ENCODE measurements at regions of chr19 and their contacts with region 1.

Region 1: DNA sequence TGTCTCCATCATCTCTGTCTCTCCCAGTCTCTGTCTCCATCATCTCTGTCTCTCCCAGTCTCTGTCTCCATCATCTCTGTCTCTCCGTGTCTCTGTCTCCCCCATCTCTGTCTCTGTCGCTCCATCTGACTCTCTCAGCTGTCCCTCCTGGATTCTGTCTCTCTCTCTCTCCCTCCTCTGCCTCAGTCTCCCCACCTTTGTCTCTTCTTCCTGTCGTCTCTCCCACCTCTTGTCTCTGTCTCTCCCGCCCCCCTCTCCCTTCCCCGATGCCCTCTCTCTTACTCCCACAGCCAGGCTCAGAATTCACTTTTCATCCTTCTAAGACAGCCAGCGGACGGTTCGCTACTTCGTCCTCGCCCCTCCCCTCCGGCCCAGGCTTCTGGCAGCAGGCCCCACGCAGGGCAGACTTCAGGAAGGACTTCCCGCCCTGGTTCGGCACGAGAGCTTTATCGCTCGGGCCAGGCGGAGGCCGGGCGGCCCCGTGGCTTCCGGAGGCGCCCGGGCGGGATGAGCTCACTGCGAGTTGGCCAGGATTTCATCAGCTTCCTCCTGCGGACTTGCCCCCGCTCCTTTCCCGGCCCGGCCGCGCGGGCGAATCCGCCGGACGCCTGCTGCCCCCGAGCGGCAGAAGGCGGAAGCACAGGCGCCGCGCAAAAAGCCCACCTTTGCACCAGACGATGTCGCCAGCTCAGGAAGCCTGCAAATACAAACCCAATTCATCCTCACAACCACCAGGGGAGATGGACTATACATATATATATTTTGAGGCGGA is 12.4 kb upstream of the CCDC9 start:
- DNase-seq: peak; percentile 95
- ATAC-seq: peak; percentile 61
- H3K4me3 Mint-ChIP-seq: peak overlapping the region; percentile 64
- H3K27ac Mint-ChIP-seq: peak overlapping the region; percentile 82
- H3K4me1 Mint-ChIP-seq: peaks cover 19% of the 10 kb centered on the region
- H3K27me3 Mint-ChIP-seq: peaks cover 45% of the 10 kb centered on the region
- CTCF ChIP-seq: peak; percentile 88

Region 2: GRCh38 chr19:47075179-47075810 is 168.7 kb before region 1 on chr19:
- CTCF ChIA-PET with region 1: interaction called, 14 read pairs
- POLR2A ChIA-PET with region 1: no interaction called
- DNase-seq: no peak
- ATAC-seq: no peak
- H3K4me3 Mint-ChIP-seq: no peak overlapping the region
- H3K27ac Mint-ChIP-seq: peak overlapping the region; percentile 61
- H3K4me1 Mint-ChIP-seq: no peaks in the 10 kb centered on the region
- H3K27me3 Mint-ChIP-seq: no peaks in the 10 kb centered on the region
- CTCF ChIP-seq: no peak

Region 3: DNA sequence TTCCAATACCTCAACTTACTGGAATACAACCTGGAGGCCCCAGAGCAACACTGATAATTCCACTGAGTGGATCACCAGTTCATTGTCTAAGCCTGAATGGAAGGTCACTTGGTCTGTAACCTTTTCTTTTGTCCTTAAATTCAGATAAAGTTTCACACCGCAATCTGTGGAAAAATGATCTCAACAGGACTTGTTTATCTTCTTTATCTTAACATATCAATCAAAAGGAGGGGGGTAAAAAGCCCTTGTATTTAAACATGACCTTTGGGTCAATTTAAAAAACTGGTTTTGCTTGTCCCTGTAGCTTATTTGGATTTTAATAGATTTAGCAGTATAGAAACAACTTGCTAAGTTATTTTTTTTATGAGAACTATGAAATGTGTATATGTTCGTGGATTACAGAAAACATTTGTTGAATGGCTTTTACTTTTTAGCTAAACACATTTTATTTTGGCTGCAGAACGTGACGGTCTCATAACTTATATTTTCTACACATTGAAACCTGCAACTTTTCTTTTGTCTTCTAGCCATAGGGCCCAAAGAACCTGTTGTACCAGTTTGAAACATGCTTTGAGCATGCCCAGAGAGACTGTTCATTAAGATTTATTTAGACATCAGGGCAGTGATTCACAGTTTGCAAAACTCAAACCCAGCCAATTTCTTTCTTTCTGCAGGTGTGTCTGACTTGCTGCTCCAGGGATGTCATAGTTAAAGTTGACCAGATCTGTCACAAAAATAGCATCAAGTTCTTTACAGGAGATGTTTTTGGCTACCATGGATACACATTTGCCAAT is 91.5 kb before region 1 on chr19:
- CTCF ChIA-PET with region 1: interaction called, 26 read pairs
- POLR2A ChIA-PET with region 1: interaction called, 10 read pairs
- DNase-seq: no peak
- ATAC-seq: no peak
- H3K4me3 Mint-ChIP-seq: no peak overlapping the region
- H3K27ac Mint-ChIP-seq: peak overlapping the region; percentile 87
- H3K4me1 Mint-ChIP-seq: peaks cover 34% of the 10 kb centered on the region
- H3K27me3 Mint-ChIP-seq: no peaks in the 10 kb centered on the region
- CTCF ChIP-seq: no peak

Region 4: DNA sequence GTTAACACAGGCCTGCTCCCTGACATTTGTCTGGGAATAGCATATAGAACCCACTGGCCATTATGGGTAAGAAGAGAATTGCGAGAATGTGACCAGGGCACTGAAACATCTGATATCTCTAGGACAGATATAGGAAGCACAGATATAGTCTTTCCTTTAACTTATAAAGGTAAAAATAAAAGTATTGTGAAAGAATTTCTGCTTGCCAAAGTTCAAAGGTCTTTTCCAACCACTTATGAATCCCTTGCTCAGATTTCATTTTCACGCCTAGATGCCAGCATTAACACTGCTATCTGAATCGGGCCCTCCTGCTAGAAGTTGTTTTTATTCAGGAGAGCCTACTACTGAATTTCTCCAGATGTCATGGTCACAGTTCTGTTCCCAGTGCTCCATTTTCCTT is 40.7 kb before region 1 on chr19:
- CTCF ChIA-PET with region 1: interaction called, 12 read pairs
- POLR2A ChIA-PET with region 1: no interaction called
- DNase-seq: no peak
- ATAC-seq: no peak
- H3K4me3 Mint-ChIP-seq: no peak overlapping the region
- H3K27ac Mint-ChIP-seq: peak overlapping the region; percentile 93
- H3K4me1 Mint-ChIP-seq: no peaks in the 10 kb centered on the region
- H3K27me3 Mint-ChIP-seq: no peaks in the 10 kb centered on the region
- CTCF ChIP-seq: no peak

Region 5: DNA sequence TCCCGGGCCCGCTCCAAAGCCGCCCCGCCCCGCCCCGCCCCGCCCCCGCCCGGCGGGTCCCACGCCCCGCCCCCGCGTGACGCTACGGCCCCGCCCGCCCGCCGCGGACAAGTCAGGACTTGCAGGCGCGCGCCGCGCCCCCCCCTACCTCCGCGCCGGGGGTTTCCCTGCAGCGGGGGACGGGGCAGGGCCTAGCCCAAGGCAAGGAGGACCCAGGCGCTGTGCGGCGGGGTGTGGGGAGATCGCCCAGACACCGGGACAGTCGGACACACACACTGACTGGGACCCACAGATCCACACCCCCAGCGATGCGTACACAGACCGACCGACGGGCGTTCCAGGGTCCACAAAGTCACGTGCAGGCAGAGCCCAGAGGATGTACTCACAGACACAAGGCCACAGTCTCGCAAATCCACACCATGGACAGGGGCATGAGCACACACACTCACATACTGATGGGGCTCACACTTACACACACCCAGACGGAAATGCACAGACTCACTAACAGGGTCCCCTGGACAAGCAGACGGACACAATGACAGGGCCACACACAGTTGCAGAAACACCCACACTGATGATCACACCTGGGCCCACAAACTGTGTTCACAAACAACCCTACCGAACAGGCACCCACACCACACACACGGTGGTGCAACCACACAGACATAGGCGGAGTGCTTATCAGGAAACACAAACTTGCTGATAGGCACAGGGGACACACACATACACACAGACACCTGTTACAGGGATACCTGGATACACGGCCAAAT is 12.6 kb before region 1 on chr19:
- CTCF ChIA-PET with region 1: interaction called, 136 read pairs
- POLR2A ChIA-PET with region 1: interaction called, 61 read pairs
- DNase-seq: peak; percentile 86
- ATAC-seq: peak; percentile 4
- H3K4me3 Mint-ChIP-seq: peak overlapping the region; percentile 66
- H3K27ac Mint-ChIP-seq: peak overlapping the region; percentile 84
- H3K4me1 Mint-ChIP-seq: peaks cover 21% of the 10 kb centered on the region
- H3K27me3 Mint-ChIP-seq: no peaks in the 10 kb centered on the region; the same call in 1 of the 2 replicates
- CTCF ChIP-seq: no peak